GM12878 (cell line): ENCODE measurements at regions of chr6 and their contacts with region 1.

Region 1: GRCh38 chr6:32940656-32941213 is at the start of gene HLA-DMB:
- DNase-seq: peak; percentile 97
- ATAC-seq: peak; percentile 74
- H3K4me3 ChIP-seq: peak within 1 kb of the TSS; percentile 79
- H3K27ac ChIP-seq: peak within 1 kb of the TSS; percentile 96
- H3K4me1 ChIP-seq: peaks cover 41% of the 10 kb centered on the region
- H3K27me3 ChIP-seq: no peaks in the 10 kb centered on the region
- CTCF ChIP-seq: no peak
- EP300 ChIP-seq: no peak
- POLR2A ChIP-seq: peak; percentile 71
- RAD21 ChIP-seq: no peak
- polyA plus RNA-seq, gene HLA-DMB: 117 to 170 TPM

Region 2: GRCh38 chr6:32589598-32590449 is 350.9 kb before region 1 on chr6 and contains the start of gene HLA-DRB1:
- CTCF ChIA-PET with region 1: no interaction called
- POLR2A ChIA-PET with region 1: no interaction called
- RAD21 ChIA-PET with region 1: no interaction called
- SMC1A ChIA-PET with region 1: no interaction called
- in situ Hi-C with region 1: no loop called
- intact Hi-C with region 1: no loop called
- DNase-seq: peak; percentile 91
- ATAC-seq: peak; percentile 89
- H3K4me3 ChIP-seq: peak within 1 kb of the TSS; percentile 72
- H3K27ac ChIP-seq: peak within 1 kb of the TSS; percentile 93
- H3K4me1 ChIP-seq: peaks cover 4% of the 10 kb centered on the region; the same call in 1 of the 2 replicates
- H3K27me3 ChIP-seq: no peaks in the 10 kb centered on the region
- CTCF ChIP-seq: no peak
- EP300 ChIP-seq: peak in 1 of 2 experiments; percentile 20; a peak in 1 of 4 replicates
- POLR2A ChIP-seq: peak; percentile 82
- RAD21 ChIP-seq: no peak
- polyA plus RNA-seq, gene HLA-DRB1: 312 to 364 TPM

Region 3: GRCh38 chr6:32609731-32610640 is 330.7 kb before region 1 on chr6:
- CTCF ChIA-PET with region 1: no interaction called
- POLR2A ChIA-PET with region 1: no interaction called
- RAD21 ChIA-PET with region 1: no interaction called
- SMC1A ChIA-PET with region 1: no interaction called
- in situ Hi-C with region 1: loop called (anchors 10 kb)
- intact Hi-C with region 1: no loop called
- DNase-seq: peak; percentile 100
- ATAC-seq: peak; percentile 84
- H3K4me3 ChIP-seq: peak overlapping the region; percentile 3; the same call in 1 of the 2 replicates
- H3K27ac ChIP-seq: peak overlapping the region; percentile 95
- H3K4me1 ChIP-seq: peaks cover 17% of the 10 kb centered on the region
- H3K27me3 ChIP-seq: no peaks in the 10 kb centered on the region
- CTCF ChIP-seq: no peak
- EP300 ChIP-seq: peak; percentile 30 to 68; a peak in 2 of 4 replicates
- POLR2A ChIP-seq: peak; percentile 59; the same call in 1 of the 2 replicates
- RAD21 ChIP-seq: no peak

Region 4: GRCh38 chr6:32785781-32786533 is 154.8 kb before region 1 on chr6:
- CTCF ChIA-PET with region 1: no interaction called
- POLR2A ChIA-PET with region 1: no interaction called
- RAD21 ChIA-PET with region 1: no interaction called
- SMC1A ChIA-PET with region 1: no interaction called
- in situ Hi-C with region 1: no loop called
- intact Hi-C with region 1: no loop called
- DNase-seq: peak; percentile 27
- ATAC-seq: peak; percentile 94
- H3K4me3 ChIP-seq: no peak overlapping the region
- H3K27ac ChIP-seq: no peak overlapping the region
- H3K4me1 ChIP-seq: no peaks in the 10 kb centered on the region
- H3K27me3 ChIP-seq: no peaks in the 10 kb centered on the region; a peak in 1 of 4 replicates
- CTCF ChIP-seq: peak; percentile 64 to 78 (median 69)
- EP300 ChIP-seq: no peak
- POLR2A ChIP-seq: no peak
- RAD21 ChIP-seq: peak; percentile 80

Region 5: DNA sequence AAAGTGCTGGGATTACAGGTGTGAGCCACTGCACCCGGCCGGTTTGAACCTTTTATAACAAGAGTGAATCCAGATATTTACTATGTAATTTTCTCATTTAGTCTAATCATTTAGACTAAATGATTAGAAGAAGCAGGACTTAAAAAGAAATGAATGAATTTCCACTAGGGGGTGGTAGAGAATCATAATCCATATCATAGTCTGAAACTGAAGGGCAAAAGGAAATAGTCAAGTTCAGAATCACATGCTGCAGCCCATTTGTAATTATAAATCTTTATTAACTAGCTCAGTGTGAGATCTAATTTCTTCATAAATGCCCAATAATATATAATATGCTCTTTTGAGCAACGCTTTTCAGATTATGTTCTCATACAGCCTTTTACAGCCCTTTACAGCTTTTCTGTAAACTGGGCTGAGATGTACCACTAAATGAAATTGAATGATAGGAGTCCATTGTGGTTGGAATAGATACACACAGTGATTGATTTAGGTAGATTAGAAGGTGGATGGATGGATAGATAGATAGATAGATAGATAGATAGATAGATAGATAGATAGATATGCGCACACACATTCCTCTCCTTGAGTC is 54.9 kb before region 1 on chr6:
- CTCF ChIA-PET with region 1: interaction called, 14 read pairs
- POLR2A ChIA-PET with region 1: no interaction called
- RAD21 ChIA-PET with region 1: interaction called, 8 read pairs
- SMC1A ChIA-PET with region 1: interaction called, 8 read pairs
- in situ Hi-C with region 1: no loop called
- intact Hi-C with region 1: no loop called
- DNase-seq: peak; percentile 23
- ATAC-seq: peak; percentile 83
- H3K4me3 ChIP-seq: no peak overlapping the region
- H3K27ac ChIP-seq: no peak overlapping the region
- H3K4me1 ChIP-seq: 0 out of 2 replicates have a peak, but pooled peaks cover 3% of the 10 kb centered on the region
- H3K27me3 ChIP-seq: no peaks in the 10 kb centered on the region; a peak in 1 of 4 replicates
- CTCF ChIP-seq: peak; percentile 38 to 61 (median 43); a peak in 5 of 6 replicates
- EP300 ChIP-seq: no peak
- POLR2A ChIP-seq: no peak
- RAD21 ChIP-seq: peak; percentile 83

Region 6: GRCh38 chr6:32920715-32921114 is 20.0 kb before region 1 on chr6:
- CTCF ChIA-PET with region 1: interaction called, 5 read pairs
- POLR2A ChIA-PET with region 1: interaction called, 4 read pairs
- RAD21 ChIA-PET with region 1: no interaction called
- SMC1A ChIA-PET with region 1: interaction called, 12 read pairs
- in situ Hi-C with region 1: no loop called
- intact Hi-C with region 1: no loop called
- DNase-seq: no peak
- ATAC-seq: peak; percentile 50
- H3K4me3 ChIP-seq: no peak overlapping the region
- H3K27ac ChIP-seq: no peak overlapping the region; the same call in 1 of the 2 replicates
- H3K4me1 ChIP-seq: peaks cover 14% of the 10 kb centered on the region
- H3K27me3 ChIP-seq: no peaks in the 10 kb centered on the region
- CTCF ChIP-seq: no peak
- EP300 ChIP-seq: no peak
- POLR2A ChIP-seq: no peak
- RAD21 ChIP-seq: no peak